AG04450 (cell line): ENCODE measurements at regions of chr7 and their contacts with region 1.

Region 1: GRCh38 chr7:92590711-92591310 is 621 bp upstream of the FAM133B start:
- DNase-seq: no peak
- H3K4me3 ChIP-seq: peak overlapping the region; percentile 96
- H3K27ac ChIP-seq: no peak overlapping the region
- H3K27me3 ChIP-seq: no peaks in the 10 kb centered on the region
- CTCF ChIP-seq: no peak

Region 2: GRCh38 chr7:92567460-92567859 is 23.4 kb before region 1 on chr7:
- CTCF ChIA-PET with region 1: interaction called, 12 read pairs
- POLR2A ChIA-PET with region 1: no interaction called
- DNase-seq: no peak
- H3K4me3 ChIP-seq: no peak overlapping the region
- H3K27ac ChIP-seq: no peak overlapping the region
- H3K27me3 ChIP-seq: no peaks in the 10 kb centered on the region
- CTCF ChIP-seq: no peak

Region 3: GRCh38 chr7:92731335-92732063 is 140.7 kb after region 1 on chr7:
- CTCF ChIA-PET with region 1: no interaction called
- POLR2A ChIA-PET with region 1: no interaction called
- DNase-seq: no peak
- H3K4me3 ChIP-seq: no peak overlapping the region
- H3K27ac ChIP-seq: no peak overlapping the region
- H3K27me3 ChIP-seq: no peaks in the 10 kb centered on the region
- CTCF ChIP-seq: no peak

Region 4: GRCh38 chr7:93359520-93360198 is 768.8 kb after region 1 on chr7:
- CTCF ChIA-PET with region 1: no interaction called
- POLR2A ChIA-PET with region 1: no interaction called
- DNase-seq: no peak
- H3K4me3 ChIP-seq: no peak overlapping the region
- H3K27ac ChIP-seq: no peak overlapping the region
- H3K27me3 ChIP-seq: no peaks in the 10 kb centered on the region
- CTCF ChIP-seq: no peak